Activated B cell treated with CpG ODN at 0.5 μM for 24 hours (primary cell): ENCODE measurements at regions of chr20 and their contacts with region 1.

Region 1: DNA sequence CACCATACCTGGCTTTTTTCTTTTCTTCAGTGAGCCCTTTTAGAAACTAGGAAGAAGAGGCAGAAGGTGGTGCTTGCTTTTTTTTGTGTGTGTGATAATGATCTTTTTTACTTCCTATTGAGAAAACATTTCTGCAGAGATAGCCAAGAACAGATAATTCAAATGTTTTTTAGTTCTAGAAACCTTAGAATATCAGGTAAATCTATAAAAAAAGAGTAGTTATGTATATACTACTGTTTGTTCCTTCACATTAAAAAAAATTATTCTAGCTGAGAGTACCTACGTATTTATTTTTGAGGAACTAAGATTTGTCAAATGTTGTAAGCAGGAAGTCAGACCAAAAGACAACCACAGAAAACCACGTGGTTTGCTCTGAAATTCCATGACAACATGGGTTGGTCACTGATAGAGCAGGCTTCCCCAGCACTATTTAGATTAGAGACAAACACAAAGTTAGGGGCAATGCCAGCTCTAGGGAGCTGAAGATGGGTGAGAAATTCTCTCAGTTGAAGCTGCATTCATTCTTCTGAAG is 12.8 kb downstream of the STK4 start:
- DNase-seq: no peak
- ATAC-seq: peak; percentile 91
- H3K4me3 Mint-ChIP-seq: peak overlapping the region; percentile 59
- H3K27ac Mint-ChIP-seq: peak overlapping the region; percentile 97
- H3K4me1 Mint-ChIP-seq: peaks cover 79% of the 10 kb centered on the region
- H3K27me3 Mint-ChIP-seq: no peaks in the 10 kb centered on the region
- CTCF ChIP-seq: no peak

Region 2: GRCh38 chr20:44960103-44960852 is 18.9 kb before region 1 on chr20 and contains the start of gene TOMM34:
- CTCF ChIA-PET with region 1: interaction called, 20 read pairs
- POLR2A ChIA-PET with region 1: interaction called, 153 read pairs
- intact Hi-C with region 1: loop called (anchors 1 kb)
- DNase-seq: peak; percentile 92
- ATAC-seq: peak; percentile 94
- H3K4me3 Mint-ChIP-seq: peak within 1 kb of the TSS; percentile 97
- H3K27ac Mint-ChIP-seq: peak within 1 kb of the TSS; percentile 90
- H3K4me1 Mint-ChIP-seq: peaks cover 67% of the 10 kb centered on the region
- H3K27me3 Mint-ChIP-seq: no peaks in the 10 kb centered on the region
- CTCF ChIP-seq: no peak
- total RNA-seq, gene TOMM34: 18.2 and 22.7 TPM in 2 replicates

Region 3: GRCh38 chr20:44990957-44991356 is 11.8 kb after region 1 on chr20:
- CTCF ChIA-PET with region 1: no interaction called
- POLR2A ChIA-PET with region 1: interaction called, 5 read pairs
- intact Hi-C with region 1: loop called (anchors 1 kb)
- DNase-seq: no peak
- ATAC-seq: no peak
- H3K4me3 Mint-ChIP-seq: peak overlapping the region; percentile 68
- H3K27ac Mint-ChIP-seq: peak overlapping the region; percentile 89
- H3K4me1 Mint-ChIP-seq: peaks cover 70% of the 10 kb centered on the region
- H3K27me3 Mint-ChIP-seq: no peaks in the 10 kb centered on the region
- CTCF ChIP-seq: no peak

Region 4: DNA sequence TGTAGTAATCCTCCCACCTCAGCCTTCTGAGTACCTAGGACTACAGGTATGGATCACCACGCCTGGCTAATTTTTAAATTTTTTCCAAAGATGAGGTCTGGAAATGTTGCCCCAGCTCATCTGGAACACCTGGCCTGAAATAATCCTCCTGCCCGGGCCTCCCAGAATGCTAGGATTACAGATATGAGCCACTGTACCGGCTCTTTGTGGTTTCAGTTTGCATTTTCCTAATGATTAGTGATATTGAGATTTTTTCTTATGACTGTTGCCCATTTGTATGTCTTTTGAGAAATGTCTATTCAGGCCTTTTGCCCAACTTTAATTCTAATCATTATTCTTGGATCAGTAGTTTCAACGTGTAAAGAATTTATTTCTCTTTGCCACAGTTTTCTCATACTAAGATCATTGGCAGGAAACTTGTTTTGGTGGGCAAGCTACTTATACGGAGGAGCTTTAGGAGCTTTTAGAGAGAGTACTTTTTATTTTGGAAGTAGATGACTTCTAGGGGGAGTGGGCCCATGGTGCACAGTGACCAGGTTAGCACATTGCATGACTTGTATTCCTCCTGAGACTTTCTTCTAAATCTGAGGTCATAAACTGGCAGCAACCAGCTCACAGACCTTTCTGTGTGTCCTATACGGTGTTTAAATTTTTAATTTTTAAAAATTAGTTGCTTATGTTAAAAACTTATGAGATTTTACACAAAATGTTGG is 49.4 kb after region 1 on chr20:
- CTCF ChIA-PET with region 1: no interaction called
- POLR2A ChIA-PET with region 1: no interaction called
- intact Hi-C with region 1: no loop called
- DNase-seq: no peak
- ATAC-seq: no peak
- H3K4me3 Mint-ChIP-seq: no peak overlapping the region
- H3K27ac Mint-ChIP-seq: no peak overlapping the region
- H3K4me1 Mint-ChIP-seq: peaks cover 30% of the 10 kb centered on the region
- H3K27me3 Mint-ChIP-seq: no peaks in the 10 kb centered on the region
- CTCF ChIP-seq: no peak